ENCODE measurements at regions of chr5 and their contacts with region 1.

Region 1: GRCh38 chr5:95760273-95761191 is 29.4 kb downstream of the RHOBTB3 start:
- ATAC-seq: peak in 6 of 8 experiments; percentile 25 to 78 (median 57)
- H3K4me3 ChIP-seq: no peak overlapping the region
- H3K27ac ChIP-seq: no peak overlapping the region
- H3K4me1 ChIP-seq: no peaks in the 10 kb centered on the region

Region 2: DNA sequence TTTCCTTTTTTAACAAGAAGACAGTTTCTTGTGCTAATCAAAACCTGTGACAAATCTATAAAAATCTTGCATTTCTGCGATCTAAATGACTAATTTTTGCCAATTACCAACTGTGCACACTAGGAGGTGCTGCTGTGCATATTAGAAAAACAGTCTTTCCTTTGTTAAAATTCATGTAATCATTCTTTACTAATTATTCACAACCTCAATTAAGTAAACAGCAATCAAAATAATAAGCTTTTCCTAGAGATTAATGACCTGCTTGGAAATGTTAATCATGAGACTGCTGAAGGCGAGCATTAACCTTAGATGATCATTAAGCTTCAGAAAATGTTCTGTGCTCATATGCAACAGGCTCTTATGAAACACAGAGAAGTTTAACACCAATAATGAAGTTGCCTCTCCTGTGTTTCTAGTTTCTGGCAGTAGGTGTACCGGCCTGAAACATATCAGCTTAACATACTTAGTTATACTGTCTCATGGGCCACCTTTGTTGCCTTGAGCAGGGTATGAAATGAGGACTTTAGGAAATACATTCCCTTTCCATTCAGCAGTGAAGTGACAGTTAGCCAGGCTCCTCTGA is 96.2 kb before region 1 on chr5:
- in situ Hi-C with region 1: loop called in 2 of 9 experiments (anchors 25 kb)
- ATAC-seq: peak in 3 of 8 experiments; percentile 22 to 52 (median 27)
- H3K4me3 ChIP-seq: no peak overlapping the region
- H3K27ac ChIP-seq: no peak overlapping the region
- H3K4me1 ChIP-seq: no peaks in the 10 kb centered on the region

Measured in motor neuron (in vitro differentiated cells).